B cell (primary cell): ENCODE measurements at regions of chr21 and their contacts with region 1.

Region 1: GRCh38 chr21:44949779-44950198 is 10.0 kb downstream of the SLX9 start:
- DNase-seq: peak; percentile 85
- ATAC-seq: peak; percentile 84
- H3K4me3 ChIP-seq: no peak overlapping the region
- H3K4me3 Mint-ChIP-seq: no peak overlapping the region
- H3K27ac ChIP-seq: no peak overlapping the region
- H3K27ac Mint-ChIP-seq: peak overlapping the region; percentile 50
- H3K4me1 ChIP-seq: peaks cover 17 to 37% of the 10 kb centered on the region in 2 donors
- H3K4me1 Mint-ChIP-seq: peaks cover 27% of the 10 kb centered on the region
- H3K27me3 ChIP-seq: no peaks in the 10 kb centered on the region
- H3K27me3 Mint-ChIP-seq: no peaks in the 10 kb centered on the region
- CTCF ChIP-seq: peak; percentile 96

Region 2: DNA sequence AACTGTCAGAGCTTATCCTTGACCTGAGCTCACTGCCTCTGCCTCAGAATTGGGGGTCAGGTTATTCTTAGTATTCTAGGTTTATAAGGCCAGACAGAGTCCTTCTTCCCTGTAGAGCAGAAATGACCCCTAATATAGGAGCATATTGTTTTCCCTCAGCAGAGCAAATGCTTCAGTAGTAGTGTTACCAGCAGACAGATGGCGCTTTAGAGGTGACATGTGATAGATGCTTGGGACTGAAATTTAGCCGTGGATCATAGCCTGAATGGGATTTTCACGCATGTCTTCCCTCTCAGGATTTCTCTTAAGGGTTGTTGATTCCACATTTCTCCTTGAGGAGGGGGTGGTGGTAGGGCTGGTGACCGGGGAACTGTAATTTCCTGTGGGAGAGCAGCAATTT is 149.1 kb after region 1 on chr21:
- CTCF ChIA-PET with region 1: interaction called, 21 read pairs
- POLR2A ChIA-PET with region 1: no interaction called
- intact Hi-C with region 1: no loop called
- DNase-seq: peak; percentile 42
- ATAC-seq: no peak
- H3K4me3 ChIP-seq: no peak overlapping the region
- H3K4me3 Mint-ChIP-seq: peak overlapping the region; percentile 16
- H3K27ac ChIP-seq: peak overlapping the region in 1 of 2 donors; percentile 6
- H3K27ac Mint-ChIP-seq: peak overlapping the region; percentile 60
- H3K4me1 ChIP-seq: peaks cover 74 to 81% of the 10 kb centered on the region in 2 donors
- H3K4me1 Mint-ChIP-seq: peaks cover 77% of the 10 kb centered on the region
- H3K27me3 ChIP-seq: no peaks in the 10 kb centered on the region
- H3K27me3 Mint-ChIP-seq: no peaks in the 10 kb centered on the region
- CTCF ChIP-seq: peak; percentile 32

Region 3: DNA sequence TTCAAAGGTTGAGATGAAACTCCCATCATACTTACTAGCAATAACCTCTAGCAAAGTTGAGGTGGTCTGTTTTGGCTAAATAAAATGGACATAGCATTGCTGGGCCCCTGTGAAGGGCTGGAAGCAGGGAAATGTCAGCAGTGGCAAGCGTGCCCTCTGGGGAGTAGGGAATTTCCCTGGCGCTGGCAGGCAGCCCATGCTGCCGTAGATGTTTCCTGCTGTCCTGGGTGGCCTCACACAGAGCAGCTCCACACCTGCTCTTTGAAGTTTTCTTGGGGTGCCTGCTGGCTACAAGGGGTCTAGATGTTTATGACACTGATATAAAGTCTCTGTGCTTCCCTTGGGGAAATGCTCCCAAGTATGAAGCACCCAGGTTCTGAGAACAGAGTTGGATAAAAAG is 154.8 kb after region 1 on chr21:
- CTCF ChIA-PET with region 1: interaction called, 21 read pairs
- POLR2A ChIA-PET with region 1: no interaction called
- intact Hi-C with region 1: no loop called
- DNase-seq: peak; percentile 68
- ATAC-seq: peak; percentile 57
- H3K4me3 ChIP-seq: peak overlapping the region in 2 of 5 experiments; percentile 20
- H3K4me3 Mint-ChIP-seq: peak overlapping the region; percentile 72
- H3K27ac ChIP-seq: peak overlapping the region; percentile 67 to 81
- H3K27ac Mint-ChIP-seq: peak overlapping the region; percentile 28
- H3K4me1 ChIP-seq: peaks cover 79 to 80% of the 10 kb centered on the region in 2 donors
- H3K4me1 Mint-ChIP-seq: peaks cover 82% of the 10 kb centered on the region
- H3K27me3 ChIP-seq: no peaks in the 10 kb centered on the region
- H3K27me3 Mint-ChIP-seq: no peaks in the 10 kb centered on the region
- CTCF ChIP-seq: no peak

Region 4: GRCh38 chr21:45120975-45121374 is 171.2 kb after region 1 on chr21:
- CTCF ChIA-PET with region 1: interaction called, 423 read pairs
- POLR2A ChIA-PET with region 1: no interaction called
- intact Hi-C with region 1: no loop called
- DNase-seq: no peak
- ATAC-seq: no peak
- H3K4me3 ChIP-seq: no peak overlapping the region
- H3K4me3 Mint-ChIP-seq: no peak overlapping the region
- H3K27ac ChIP-seq: no peak overlapping the region
- H3K27ac Mint-ChIP-seq: no peak overlapping the region
- H3K4me1 ChIP-seq: peaks cover 72 to 78% of the 10 kb centered on the region in 2 donors
- H3K4me1 Mint-ChIP-seq: peaks cover 86% of the 10 kb centered on the region
- H3K27me3 ChIP-seq: no peaks in the 10 kb centered on the region
- H3K27me3 Mint-ChIP-seq: no peaks in the 10 kb centered on the region
- CTCF ChIP-seq: no peak

Region 5: GRCh38 chr21:45302078-45303055 is 352.6 kb after region 1 on chr21:
- CTCF ChIA-PET with region 1: no interaction called
- POLR2A ChIA-PET with region 1: no interaction called
- intact Hi-C with region 1: no loop called
- DNase-seq: no peak
- ATAC-seq: no peak
- H3K4me3 ChIP-seq: no peak overlapping the region
- H3K4me3 Mint-ChIP-seq: no peak overlapping the region
- H3K27ac ChIP-seq: no peak overlapping the region
- H3K27ac Mint-ChIP-seq: no peak overlapping the region
- H3K4me1 ChIP-seq: no peaks in the 10 kb centered on the region
- H3K4me1 Mint-ChIP-seq: no peaks in the 10 kb centered on the region
- H3K27me3 ChIP-seq: peaks cover 0 to 8% (median 0%) of the 10 kb centered on the region in 4 experiments
- H3K27me3 Mint-ChIP-seq: no peaks in the 10 kb centered on the region
- CTCF ChIP-seq: no peak